ENCODE measurements at regions of chr12 and their contacts with region 1.

Region 1: DNA sequence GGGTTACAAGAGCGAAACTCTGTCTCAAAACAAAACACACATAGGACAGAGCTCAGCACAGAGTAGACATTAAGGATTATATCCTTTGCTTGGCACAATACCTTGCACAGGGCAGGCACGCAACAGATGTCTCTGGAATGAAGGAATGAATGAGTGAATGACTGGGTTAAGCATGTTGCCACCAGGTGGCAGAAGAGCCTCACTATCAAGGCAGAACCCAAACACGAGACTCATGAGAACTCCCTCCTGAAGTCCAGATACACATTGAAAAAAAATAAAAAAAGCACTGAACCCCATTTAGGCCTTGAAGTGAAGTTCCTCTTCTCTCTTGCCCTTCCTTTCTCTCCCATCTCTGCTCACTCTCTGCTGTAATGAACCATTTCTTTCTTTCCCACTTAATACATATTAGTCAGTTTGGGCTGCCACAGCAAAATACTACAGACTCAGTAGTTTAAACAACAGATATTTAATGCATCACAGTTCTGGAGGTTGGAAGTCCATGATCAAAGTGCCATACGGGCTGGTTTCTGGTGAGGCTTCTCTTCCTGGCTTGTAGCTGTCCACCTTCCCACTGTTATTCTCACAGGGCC is 26.6 kb upstream of the LTA4H start:
- DNase-seq: peak; percentile 87
- H3K4me3 ChIP-seq: no peak overlapping the region
- H3K27ac ChIP-seq: no peak overlapping the region
- H3K4me1 ChIP-seq: peaks cover 6% of the 10 kb centered on the region
- CTCF ChIP-seq: peak; percentile 91

Region 2: DNA sequence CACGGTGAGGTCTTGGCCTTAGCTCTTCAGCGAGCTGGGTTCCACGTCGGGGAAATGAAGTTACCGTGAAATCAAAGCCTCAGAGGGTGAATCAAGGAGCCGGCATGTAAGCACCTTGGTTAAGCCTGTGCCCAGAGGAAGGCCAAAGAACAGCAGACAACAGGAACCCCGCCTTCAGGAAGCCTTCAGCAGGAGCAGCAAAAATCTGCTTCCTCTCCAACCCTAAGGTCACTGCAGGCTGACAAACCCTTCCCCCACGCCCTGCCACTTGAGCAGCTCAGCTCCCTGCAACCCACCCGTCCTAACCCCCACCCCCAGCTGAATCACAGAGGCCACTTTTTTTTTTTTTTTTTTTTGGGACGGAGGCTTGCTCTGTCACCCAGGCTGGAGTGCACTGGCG is 46.4 kb after region 1 on chr12:
- CTCF ChIA-PET with region 1: interaction called, 4 read pairs
- POLR2A ChIA-PET with region 1: interaction called, 3 read pairs
- intact Hi-C with region 1: loop called (anchors 1 kb)
- DNase-seq: peak; percentile 33
- H3K4me3 ChIP-seq: no peak overlapping the region
- H3K27ac ChIP-seq: no peak overlapping the region
- H3K4me1 ChIP-seq: peaks cover 11% of the 10 kb centered on the region
- CTCF ChIP-seq: no peak

Region 3: GRCh38 chr12:96132819-96133218 is 70.9 kb after region 1 on chr12:
- CTCF ChIA-PET with region 1: no interaction called
- POLR2A ChIA-PET with region 1: interaction called, 4 read pairs
- intact Hi-C with region 1: loop called (anchors 2 kb)
- DNase-seq: no peak
- H3K4me3 ChIP-seq: no peak overlapping the region
- H3K27ac ChIP-seq: no peak overlapping the region
- H3K4me1 ChIP-seq: no peaks in the 10 kb centered on the region
- CTCF ChIP-seq: peak; percentile 34; the same call in 1 of the 2 replicates

Region 4: DNA sequence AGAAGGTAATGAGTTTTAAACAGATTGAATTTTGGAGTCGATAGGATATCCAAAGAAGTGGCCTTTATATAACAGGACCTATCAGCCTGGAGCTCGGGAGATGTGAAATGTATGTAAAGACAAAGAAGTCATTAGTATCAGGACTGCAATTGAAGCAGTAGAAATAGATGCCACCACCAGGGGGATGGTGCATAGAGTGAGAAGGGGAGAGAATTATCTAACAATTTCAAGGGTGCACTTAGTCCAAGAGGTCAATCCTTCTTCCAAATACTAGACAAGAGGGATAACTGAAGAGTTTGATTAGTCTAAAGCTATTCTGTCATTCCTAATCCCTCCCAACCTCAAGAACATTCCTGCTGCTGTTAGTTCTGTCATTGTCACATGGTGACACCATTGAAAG is 555.2 kb after region 1 on chr12:
- CTCF ChIA-PET with region 1: no interaction called
- POLR2A ChIA-PET with region 1: no interaction called
- intact Hi-C with region 1: no loop called
- DNase-seq: peak; percentile 5
- H3K4me3 ChIP-seq: no peak overlapping the region
- H3K27ac ChIP-seq: no peak overlapping the region
- H3K4me1 ChIP-seq: no peaks in the 10 kb centered on the region
- CTCF ChIP-seq: no peak; the same call in 1 of the 2 replicates